Endothelial cell of umbilical vein (primary cell): ENCODE measurements at regions of chr9 and their contacts with region 1.

Region 1: GRCh38 chr9:92133949-92134604 is 18.9 kb upstream of the SPTLC1 start:
- DNase-seq: peak; percentile 80
- H3K4me3 ChIP-seq: peak overlapping the region in 1 of 3 experiments; percentile 8
- H3K27ac ChIP-seq: peak overlapping the region; percentile 32
- H3K4me1 ChIP-seq: peaks cover 5% of the 10 kb centered on the region
- H3K27me3 ChIP-seq: no peaks in the 10 kb centered on the region
- CTCF ChIP-seq: peak; percentile 91 to 97
- POLR2A ChIP-seq: no peak

Region 2: DNA sequence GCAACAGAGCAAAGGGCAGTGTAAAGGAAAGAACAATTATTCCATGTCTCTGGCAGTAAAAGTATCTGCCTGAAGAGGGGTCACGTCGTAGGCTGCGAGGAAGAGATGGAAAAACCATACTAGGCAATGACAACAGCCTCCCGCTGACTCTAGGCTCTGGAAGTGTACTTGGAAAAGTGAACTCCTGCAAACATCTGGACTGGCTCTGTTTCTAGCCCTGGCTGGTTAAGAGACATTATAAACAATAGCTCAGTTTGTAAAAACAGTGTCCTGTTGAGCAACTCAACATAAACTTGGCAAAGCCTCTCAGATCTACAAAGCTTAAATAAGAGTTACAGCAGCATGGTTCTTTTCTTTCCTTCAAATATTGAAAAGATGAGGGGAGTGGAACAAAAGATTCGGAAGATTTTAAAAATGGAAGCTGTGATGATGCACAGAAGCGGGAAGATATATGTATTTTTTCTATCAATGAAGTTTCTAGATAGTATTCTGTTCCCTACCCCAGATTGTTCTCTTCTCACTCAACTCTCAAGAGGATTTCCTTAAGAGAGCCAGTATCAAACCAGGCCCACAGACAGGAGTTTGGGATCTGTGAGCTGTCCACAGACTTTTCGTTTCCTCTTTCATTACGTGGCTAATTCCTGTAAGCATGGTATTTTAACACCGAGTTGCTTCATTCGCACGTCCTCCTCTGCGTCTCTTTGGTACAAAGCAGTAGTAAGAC is 98.2 kb before region 1 on chr9:
- CTCF ChIA-PET with region 1: no interaction called
- POLR2A ChIA-PET with region 1: no interaction called
- dilution Hi-C with region 1: no loop called
- intact Hi-C with region 1: no loop called
- DNase-seq: no peak
- H3K4me3 ChIP-seq: no peak overlapping the region
- H3K27ac ChIP-seq: no peak overlapping the region
- H3K4me1 ChIP-seq: no peaks in the 10 kb centered on the region
- H3K27me3 ChIP-seq: no peaks in the 10 kb centered on the region
- CTCF ChIP-seq: no peak
- POLR2A ChIP-seq: no peak

Region 3: DNA sequence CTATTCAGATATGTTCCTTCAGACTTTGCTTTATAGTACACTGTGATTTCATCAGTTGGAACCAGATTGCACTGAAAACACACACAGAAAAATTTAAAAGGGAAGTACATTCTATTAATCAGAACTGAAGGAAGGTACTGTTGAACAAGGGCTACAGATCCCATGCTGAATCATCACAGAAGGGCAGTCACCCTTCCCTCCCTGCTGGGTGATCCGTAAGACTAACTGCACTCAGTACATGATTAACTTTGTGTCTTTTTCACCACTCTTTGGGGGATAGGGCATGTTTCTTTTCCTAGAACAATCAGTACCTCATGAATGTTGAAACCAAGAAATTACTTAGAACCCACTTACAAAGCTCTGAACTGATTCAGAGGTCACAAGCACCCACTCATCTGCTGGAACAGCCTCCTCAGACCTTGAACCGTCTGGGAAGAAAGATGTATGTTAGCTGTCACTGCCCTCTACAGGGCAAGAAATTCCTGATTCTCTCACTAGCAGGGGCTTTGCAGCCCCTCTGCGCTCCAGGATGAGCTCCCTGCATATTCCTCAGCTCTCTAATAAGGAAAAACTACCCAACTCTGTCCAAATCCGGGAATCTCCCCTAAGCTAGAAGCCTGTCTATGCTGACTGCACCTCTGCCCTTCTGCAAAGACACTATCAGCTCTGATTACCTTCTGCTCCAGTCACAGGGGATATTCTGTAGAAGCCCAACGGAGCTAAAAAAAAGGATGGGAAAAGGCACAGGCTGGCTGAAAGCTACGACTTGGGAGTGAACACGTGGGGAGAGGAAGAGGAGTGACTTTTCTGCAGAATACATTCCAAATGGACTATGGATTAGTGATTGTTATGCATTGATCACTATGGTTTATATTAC is 108.4 kb after region 1 on chr9:
- CTCF ChIA-PET with region 1: interaction called, 239 read pairs
- POLR2A ChIA-PET with region 1: no interaction called
- dilution Hi-C with region 1: no loop called
- intact Hi-C with region 1: loop called (anchors 1 kb)
- DNase-seq: peak; percentile 22
- H3K4me3 ChIP-seq: no peak overlapping the region
- H3K27ac ChIP-seq: no peak overlapping the region
- H3K4me1 ChIP-seq: no peaks in the 10 kb centered on the region
- H3K27me3 ChIP-seq: no peaks in the 10 kb centered on the region
- CTCF ChIP-seq: peak; percentile 9 to 45
- POLR2A ChIP-seq: no peak

Region 4: GRCh38 chr9:92293452-92294296 is 159.6 kb after region 1 on chr9 and contains the start of gene IARS1:
- CTCF ChIA-PET with region 1: interaction called, 4 read pairs
- POLR2A ChIA-PET with region 1: no interaction called
- dilution Hi-C with region 1: no loop called
- intact Hi-C with region 1: loop called (anchors 1 kb)
- DNase-seq: peak; percentile 99
- H3K4me3 ChIP-seq: peak within 1 kb of the TSS; percentile 76 to 98 (median 78)
- H3K27ac ChIP-seq: peak within 1 kb of the TSS; percentile 64
- H3K4me1 ChIP-seq: peaks cover 23% of the 10 kb centered on the region
- H3K27me3 ChIP-seq: no peaks in the 10 kb centered on the region
- CTCF ChIP-seq: peak in 1 of 2 donors; percentile 40
- POLR2A ChIP-seq: peak; percentile 97
- total RNA-seq, gene IARS1: 130 and 132 TPM in 2 replicates